HEK293 (cell line): ENCODE measurements at regions of chr16 and their contacts with region 1.

Region 1: GRCh38 chr16:67892899-67893742 is at the start of gene PSKH1:
- H3K4me3 ChIP-seq: peak within 1 kb of the TSS; percentile 82
- H3K27ac ChIP-seq: peak within 1 kb of the TSS; percentile 85
- H3K4me1 ChIP-seq: peaks cover 4% of the 10 kb centered on the region
- CTCF ChIP-seq: peak; percentile 27; the same call in 1 of the 2 replicates

Region 2: GRCh38 chr16:67530013-67530939 is 362.8 kb before region 1 on chr16:
- CTCF ChIA-PET with region 1: no interaction called
- POLR2A ChIA-PET with region 1: no interaction called
- H3K4me3 ChIP-seq: peak overlapping the region; percentile 56
- H3K27ac ChIP-seq: no peak overlapping the region; the same call in 1 of the 2 replicates
- H3K4me1 ChIP-seq: no peaks in the 10 kb centered on the region
- CTCF ChIP-seq: no peak

Region 3: DNA sequence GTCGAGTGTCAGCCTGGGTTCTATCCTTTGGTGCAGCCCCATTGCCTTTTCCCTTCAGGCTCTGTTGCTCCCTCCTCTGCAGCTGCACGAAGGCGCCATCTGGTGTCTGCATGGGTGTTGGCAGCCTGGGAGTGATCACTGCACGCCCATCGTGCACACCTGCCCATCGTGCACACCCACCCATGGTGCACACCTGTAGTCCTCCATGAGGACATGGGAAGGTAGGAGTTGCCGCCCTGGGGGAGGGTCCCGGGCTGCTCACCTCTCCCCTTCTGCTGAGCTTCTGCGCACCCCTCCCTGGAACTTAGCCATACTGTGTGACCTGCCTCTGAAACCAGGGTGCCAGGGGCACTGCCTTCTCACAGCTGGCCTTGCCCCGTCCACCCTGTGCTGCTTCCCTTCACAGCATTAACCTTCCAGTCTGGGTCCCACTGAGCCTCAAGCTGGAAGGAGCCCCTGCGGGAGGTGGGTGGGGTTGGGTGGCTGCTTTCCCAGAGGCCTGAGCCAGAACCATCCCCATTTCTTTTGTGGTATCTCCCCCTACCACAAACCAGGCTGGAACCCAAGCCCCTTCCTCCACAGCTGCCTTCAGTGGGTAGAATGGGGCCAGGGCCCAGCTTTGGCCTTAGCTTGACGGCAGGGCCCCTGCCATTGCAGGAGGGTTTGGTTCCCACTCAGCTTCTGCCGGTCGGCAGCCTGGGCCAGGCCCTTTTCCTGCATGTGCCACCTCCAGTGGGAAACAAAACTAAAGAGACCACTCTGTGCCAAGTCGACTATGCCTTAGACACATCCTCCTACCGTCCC is 35.6 kb after region 1 on chr16:
- CTCF ChIA-PET with region 1: interaction called, 10 read pairs
- POLR2A ChIA-PET with region 1: interaction called, 5 read pairs
- H3K4me3 ChIP-seq: no peak overlapping the region
- H3K27ac ChIP-seq: no peak overlapping the region
- H3K4me1 ChIP-seq: peaks cover 10% of the 10 kb centered on the region; the same call in 1 of the 2 replicates
- CTCF ChIP-seq: peak; percentile 92

Region 4: DNA sequence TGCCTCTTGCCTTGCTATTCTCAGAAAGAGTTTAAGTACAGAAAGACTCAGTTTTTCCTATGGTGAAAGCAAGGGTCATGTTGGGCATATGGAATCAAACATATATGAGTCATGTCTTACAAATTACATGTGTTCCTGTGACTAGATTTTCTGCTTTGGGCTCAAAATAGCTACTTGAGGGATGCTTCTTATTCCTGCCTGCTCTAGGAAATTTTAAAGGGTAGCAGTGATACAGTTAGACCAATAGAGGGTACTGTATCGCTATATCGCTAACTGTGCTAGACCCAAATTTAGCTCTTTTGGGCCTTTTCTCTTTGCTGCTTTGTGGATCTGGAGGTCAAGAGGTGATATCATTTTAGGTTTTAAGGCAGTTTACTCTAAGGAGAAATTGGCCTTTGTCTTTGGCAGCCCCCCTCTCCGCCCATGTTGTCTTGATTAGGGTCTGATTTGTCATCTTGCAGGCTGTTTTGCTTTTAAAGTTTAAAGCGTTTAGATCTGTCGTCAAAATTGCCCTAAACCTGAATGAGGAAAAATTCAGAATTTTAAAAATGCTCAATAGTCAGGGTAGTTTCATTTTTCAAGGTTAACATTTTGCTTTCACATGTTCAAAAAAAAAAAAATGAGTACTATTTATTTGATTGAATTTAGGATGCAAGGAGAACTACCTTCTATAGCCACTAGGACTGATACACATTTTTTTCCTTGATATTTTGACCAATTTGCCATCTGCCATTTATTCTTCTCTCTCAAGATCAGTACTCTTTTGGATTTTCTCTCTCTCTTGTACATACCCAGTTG is 200.9 kb after region 1 on chr16:
- CTCF ChIA-PET with region 1: interaction called, 10 read pairs
- POLR2A ChIA-PET with region 1: no interaction called
- H3K4me3 ChIP-seq: no peak overlapping the region
- H3K27ac ChIP-seq: no peak overlapping the region
- H3K4me1 ChIP-seq: peaks cover 28% of the 10 kb centered on the region
- CTCF ChIP-seq: no peak